T-cell (primary cell): ENCODE measurements at regions of chr5 and their contacts with region 1.

Region 1: DNA sequence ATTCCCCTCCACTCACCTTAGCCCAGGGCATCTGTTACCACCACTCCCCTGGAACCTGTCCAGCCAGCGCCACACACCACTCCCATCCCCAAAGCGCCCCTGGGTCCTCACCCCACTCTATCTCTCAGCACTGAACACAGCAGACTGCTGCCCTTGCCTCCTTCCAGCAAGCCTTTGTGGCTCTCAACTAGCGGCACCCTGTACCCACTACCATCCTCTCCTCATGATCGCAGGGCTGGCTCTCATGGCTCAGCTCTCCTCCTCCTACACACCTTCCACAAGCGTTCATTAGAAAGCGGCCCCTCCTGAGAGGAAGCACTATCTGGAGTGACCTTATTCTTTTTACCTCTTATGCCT is 13.3 kb upstream of the BASP1 start:
- DNase-seq: no peak
- ATAC-seq: no peak
- H3K4me3 ChIP-seq: no peak overlapping the region
- H3K4me3 Mint-ChIP-seq: no peak overlapping the region
- H3K27ac ChIP-seq: no peak overlapping the region
- H3K27ac Mint-ChIP-seq: no peak overlapping the region
- H3K4me1 ChIP-seq: no peaks in the 10 kb centered on the region
- H3K4me1 Mint-ChIP-seq: no peaks in the 10 kb centered on the region
- H3K27me3 ChIP-seq: peaks cover 0 to 6% of the 10 kb centered on the region in 2 experiments
- H3K27me3 Mint-ChIP-seq: peaks cover 2 to 6% of the 10 kb centered on the region in 2 donors

Region 2: GRCh38 chr5:17189381-17190036 is 14.6 kb before region 1 on chr5:
- CTCF ChIA-PET with region 1: interaction called, 3 to 10 read pairs
- POLR2A ChIA-PET with region 1: no interaction called
- DNase-seq: peak in 30 of 35 experiments; percentile 2 to 62 (median 26)
- ATAC-seq: no peak
- H3K4me3 ChIP-seq: no peak overlapping the region
- H3K4me3 Mint-ChIP-seq: no peak overlapping the region
- H3K27ac ChIP-seq: no peak overlapping the region
- H3K27ac Mint-ChIP-seq: no peak overlapping the region
- H3K4me1 ChIP-seq: no peaks in the 10 kb centered on the region
- H3K4me1 Mint-ChIP-seq: no peaks in the 10 kb centered on the region
- H3K27me3 ChIP-seq: peaks cover 0 to 13% of the 10 kb centered on the region in 2 experiments
- H3K27me3 Mint-ChIP-seq: peaks cover 3 to 7% of the 10 kb centered on the region in 2 donors

Region 3: GRCh38 chr5:17326600-17327037 is 122.5 kb after region 1 on chr5:
- CTCF ChIA-PET with region 1: no interaction called
- POLR2A ChIA-PET with region 1: no interaction called
- DNase-seq: no peak
- ATAC-seq: no peak
- H3K4me3 ChIP-seq: no peak overlapping the region
- H3K4me3 Mint-ChIP-seq: no peak overlapping the region
- H3K27ac ChIP-seq: no peak overlapping the region
- H3K27ac Mint-ChIP-seq: no peak overlapping the region
- H3K4me1 ChIP-seq: no peaks in the 10 kb centered on the region
- H3K4me1 Mint-ChIP-seq: no peaks in the 10 kb centered on the region
- H3K27me3 ChIP-seq: no peaks in the 10 kb centered on the region
- H3K27me3 Mint-ChIP-seq: no peaks in the 10 kb centered on the region